Transverse colon (tissue), 4 donors: ENCODE measurements at regions of chr1 and their contacts with region 1.

Region 1: GRCh38 chr1:24830680-24831272 is 85.5 kb downstream of the CLIC4 start:
- DNase-seq: no peak
- H3K4me3 ChIP-seq: no peak overlapping the region
- H3K27ac ChIP-seq: no peak overlapping the region
- H3K4me1 ChIP-seq: peaks cover 0 to 53% (median 9%) of the 10 kb centered on the region in 4 donors
- H3K27me3 ChIP-seq: no peaks in the 10 kb centered on the region
- CTCF ChIP-seq: peak; percentile 69 to 77 (median 71)
- EP300 ChIP-seq: no peak
- POLR2A ChIP-seq: no peak

Region 2: DNA sequence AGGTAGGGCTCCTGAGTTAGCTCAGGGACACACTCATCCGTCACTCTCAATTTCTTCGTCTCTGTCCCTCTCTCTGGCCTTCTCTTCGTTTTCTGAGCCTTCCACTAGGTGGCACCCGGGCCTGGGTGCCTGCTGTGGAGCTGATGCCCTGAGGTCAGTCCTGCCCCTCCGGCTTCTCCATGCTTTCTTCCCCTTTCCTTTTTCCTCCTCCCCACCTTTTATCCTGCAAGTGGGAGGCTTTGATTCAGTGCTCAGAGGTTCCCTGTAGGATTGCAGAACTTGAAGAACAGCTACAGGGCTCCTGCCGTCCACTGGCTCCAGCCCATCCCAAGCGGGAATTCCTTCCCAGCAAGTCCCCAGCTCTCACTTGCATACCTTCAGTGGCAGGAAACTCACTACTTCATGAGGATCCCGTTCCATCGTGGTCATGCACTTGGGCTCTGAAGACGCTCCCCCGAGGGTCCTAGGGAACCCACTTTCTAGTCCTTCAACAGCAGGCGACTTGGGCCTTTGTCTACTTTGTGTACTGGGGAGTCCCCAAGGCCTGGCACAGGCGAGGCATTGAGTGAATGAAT is 142.1 kb before region 1 on chr1:
- in situ Hi-C with region 1: loop called (anchors 5 kb)
- intact Hi-C with region 1: loop called (anchors 5 kb)
- DNase-seq: peak; percentile 74
- H3K4me3 ChIP-seq: no peak overlapping the region
- H3K27ac ChIP-seq: no peak overlapping the region
- H3K4me1 ChIP-seq: peaks cover 0 to 6% (median 0%) of the 10 kb centered on the region in 4 donors
- H3K27me3 ChIP-seq: no peaks in the 10 kb centered on the region
- CTCF ChIP-seq: peak; percentile 79 to 87 (median 83)
- EP300 ChIP-seq: no peak
- POLR2A ChIP-seq: no peak

Region 3: GRCh38 chr1:24930204-24931145 is 99.7 kb after region 1 on chr1 and contains the start of gene RUNX3:
- in situ Hi-C with region 1: no loop called
- intact Hi-C with region 1: no loop called
- DNase-seq: peak; percentile 83
- H3K4me3 ChIP-seq: peak within 1 kb of the TSS in 3 of 4 donors; percentile 20 to 45 (median 36)
- H3K27ac ChIP-seq: peak within 1 kb of the TSS; percentile 68 to 81 (median 78)
- H3K4me1 ChIP-seq: peaks cover 3 to 57% (median 31%) of the 10 kb centered on the region in 4 donors
- H3K27me3 ChIP-seq: peaks cover 98% of the 10 kb centered on the region
- CTCF ChIP-seq: no peak
- EP300 ChIP-seq: no peak
- POLR2A ChIP-seq: peak; percentile 18
- total RNA-seq, gene RUNX3: 1.5 to 4.8 (median 3.4) TPM

Region 4: GRCh38 chr1:25053576-25054250 is 222.9 kb after region 1 on chr1:
- in situ Hi-C with region 1: no loop called
- intact Hi-C with region 1: no loop called
- DNase-seq: no peak
- H3K4me3 ChIP-seq: no peak overlapping the region
- H3K27ac ChIP-seq: no peak overlapping the region
- H3K4me1 ChIP-seq: no peaks in the 10 kb centered on the region
- H3K27me3 ChIP-seq: peaks cover 24% of the 10 kb centered on the region
- CTCF ChIP-seq: no peak
- EP300 ChIP-seq: no peak
- POLR2A ChIP-seq: no peak